ENCODE measurements at regions of chr1 and their contacts with region 1.

Region 1: DNA sequence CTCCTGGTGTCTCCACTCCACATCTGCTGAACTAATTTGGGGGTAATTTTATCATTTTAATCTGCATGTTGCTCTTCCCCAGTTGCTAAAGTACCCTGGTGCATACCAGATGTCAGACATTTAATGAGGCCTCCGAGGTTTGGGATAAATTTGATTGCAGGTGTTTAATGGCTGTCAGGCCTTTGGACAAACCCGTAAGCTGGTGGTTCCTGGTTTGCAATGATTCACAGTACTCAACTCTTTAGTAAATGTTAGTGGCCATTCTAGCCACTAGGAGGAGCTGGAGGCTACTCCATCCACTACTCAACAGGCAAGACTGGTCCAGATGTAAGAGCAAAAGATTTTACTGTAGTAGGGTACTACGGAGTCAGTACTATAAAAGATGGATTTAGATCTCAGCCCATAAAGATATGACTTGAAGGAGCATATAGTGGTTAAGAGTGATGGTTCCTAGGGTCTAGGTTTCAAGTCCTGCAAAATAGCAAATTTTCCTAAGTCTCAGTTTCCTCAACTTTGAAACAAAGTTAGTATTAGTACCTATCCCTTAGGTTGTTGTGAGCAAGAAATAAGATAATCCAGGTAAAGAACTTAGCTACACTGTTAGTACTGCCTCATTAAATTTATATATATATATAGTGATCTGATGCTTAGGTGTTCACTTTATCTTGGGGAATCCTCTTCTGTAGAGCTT is 132.8 kb downstream of the SNX7 start:
- DNase-seq: peak in 8 of 9 donors; percentile 23 to 78 (median 66)
- ATAC-seq: peak; percentile 89
- H3K4me3 ChIP-seq: no peak overlapping the region
- H3K4me3 Mint-ChIP-seq: no peak overlapping the region
- H3K27ac ChIP-seq: no peak overlapping the region
- H3K27ac Mint-ChIP-seq: peak overlapping the region in 2 of 9 donors; percentile 60 to 65
- H3K4me1 ChIP-seq: peaks cover 6 to 20% of the 10 kb centered on the region in 2 donors
- H3K4me1 Mint-ChIP-seq: peaks cover 20 to 44% (median 30%) of the 10 kb centered on the region in 7 donors
- H3K27me3 ChIP-seq: no peaks in the 10 kb centered on the region
- H3K27me3 Mint-ChIP-seq: peaks cover 0 to 12% (median 0%) of the 10 kb centered on the region in 5 donors

Region 2: DNA sequence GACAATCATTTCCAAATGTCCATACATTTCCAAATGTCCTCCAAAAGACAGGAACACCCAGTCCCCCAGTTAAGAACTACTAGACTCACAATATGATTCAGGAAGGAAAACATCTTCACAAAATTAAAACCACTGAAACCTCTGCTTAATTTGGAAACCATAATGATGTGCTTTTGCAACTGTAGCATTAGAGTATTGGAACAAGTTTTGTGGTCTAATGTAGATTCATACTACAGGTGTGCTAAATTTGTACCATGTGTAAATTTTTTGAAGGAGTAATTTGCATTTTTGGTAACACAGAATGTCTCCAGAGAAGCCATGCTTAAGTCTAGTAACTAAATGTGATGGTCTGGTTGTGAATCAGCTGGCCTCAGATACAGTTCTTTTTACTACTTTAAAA is 1003.1 kb before region 1 on chr1:
- CTCF ChIA-PET with region 1: no interaction called
- POLR2A ChIA-PET with region 1: no interaction called
- intact Hi-C with region 1: no loop called
- DNase-seq: no peak
- ATAC-seq: no peak
- H3K4me3 ChIP-seq: no peak overlapping the region
- H3K4me3 Mint-ChIP-seq: peak overlapping the region in 1 of 10 donors; percentile 34
- H3K27ac ChIP-seq: no peak overlapping the region
- H3K27ac Mint-ChIP-seq: no peak overlapping the region
- H3K4me1 ChIP-seq: peaks cover 0 to 20% of the 10 kb centered on the region in 2 donors
- H3K4me1 Mint-ChIP-seq: peaks cover 7 to 47% (median 37%) of the 10 kb centered on the region in 7 donors
- H3K27me3 ChIP-seq: no peaks in the 10 kb centered on the region
- H3K27me3 Mint-ChIP-seq: no peaks in the 10 kb centered on the region

Region 3: DNA sequence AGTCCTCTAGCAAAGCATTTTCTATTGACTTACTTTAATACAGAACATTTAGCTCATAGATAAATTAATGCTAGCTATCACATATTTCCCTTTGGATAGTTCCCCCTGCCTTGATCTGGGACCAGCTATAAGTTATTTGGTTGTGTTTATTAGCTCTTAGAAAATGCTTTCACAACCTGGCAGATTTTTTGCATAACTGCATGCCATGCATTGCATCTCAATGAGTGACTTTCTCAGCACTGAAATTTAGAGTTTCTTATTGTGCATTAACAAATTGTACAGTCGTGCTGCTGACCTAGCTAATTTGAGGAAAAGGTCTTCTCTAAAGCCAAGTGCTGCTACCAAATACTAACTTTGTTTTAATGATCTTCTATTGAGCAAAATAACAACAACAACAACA is 45.5 kb after region 1 on chr1:
- CTCF ChIA-PET with region 1: interaction called, 3 read pairs
- POLR2A ChIA-PET with region 1: no interaction called
- intact Hi-C with region 1: loop called in 1 of 2 experiments (anchors 5 kb)
- DNase-seq: no peak
- ATAC-seq: no peak
- H3K4me3 ChIP-seq: no peak overlapping the region
- H3K4me3 Mint-ChIP-seq: no peak overlapping the region
- H3K27ac ChIP-seq: no peak overlapping the region
- H3K27ac Mint-ChIP-seq: no peak overlapping the region
- H3K4me1 ChIP-seq: peaks cover 0 to 13% of the 10 kb centered on the region in 2 donors
- H3K4me1 Mint-ChIP-seq: peaks cover 0 to 31% (median 24%) of the 10 kb centered on the region in 7 donors
- H3K27me3 ChIP-seq: no peaks in the 10 kb centered on the region
- H3K27me3 Mint-ChIP-seq: peaks cover 0 to 1% (median 0%) of the 10 kb centered on the region in 5 donors

Region 4: GRCh38 chr1:98884864-98885263 is 90.5 kb after region 1 on chr1:
- CTCF ChIA-PET with region 1: no interaction called
- POLR2A ChIA-PET with region 1: no interaction called
- intact Hi-C with region 1: loop called in 1 of 2 experiments (anchors 5 kb)
- DNase-seq: no peak
- ATAC-seq: no peak
- H3K4me3 ChIP-seq: no peak overlapping the region
- H3K4me3 Mint-ChIP-seq: no peak overlapping the region
- H3K27ac ChIP-seq: no peak overlapping the region
- H3K27ac Mint-ChIP-seq: no peak overlapping the region
- H3K4me1 ChIP-seq: no peaks in the 10 kb centered on the region
- H3K4me1 Mint-ChIP-seq: peaks cover 0 to 25% (median 7%) of the 10 kb centered on the region in 7 donors
- H3K27me3 ChIP-seq: no peaks in the 10 kb centered on the region
- H3K27me3 Mint-ChIP-seq: peaks cover 0 to 2% (median 0%) of the 10 kb centered on the region in 5 donors

Region 5: GRCh38 chr1:98991127-98992012 is 197.0 kb after region 1 on chr1:
- CTCF ChIA-PET with region 1: interaction called, 4 read pairs
- POLR2A ChIA-PET with region 1: no interaction called
- intact Hi-C with region 1: loop called in 1 of 2 experiments (anchors 5 kb)
- DNase-seq: no peak
- ATAC-seq: no peak
- H3K4me3 ChIP-seq: no peak overlapping the region
- H3K4me3 Mint-ChIP-seq: no peak overlapping the region
- H3K27ac ChIP-seq: no peak overlapping the region
- H3K27ac Mint-ChIP-seq: peak overlapping the region in 3 of 9 donors; percentile 34 to 42 (median 39)
- H3K4me1 ChIP-seq: no peaks in the 10 kb centered on the region
- H3K4me1 Mint-ChIP-seq: peaks cover 0 to 9% (median 8%) of the 10 kb centered on the region in 7 donors
- H3K27me3 ChIP-seq: no peaks in the 10 kb centered on the region
- H3K27me3 Mint-ChIP-seq: peaks cover 0 to 4% (median 0%) of the 10 kb centered on the region in 5 donors

Region 6: GRCh38 chr1:99180343-99180808 is 386.0 kb after region 1 on chr1:
- CTCF ChIA-PET with region 1: interaction called, 8 read pairs
- POLR2A ChIA-PET with region 1: no interaction called
- intact Hi-C with region 1: loop called (anchors 1 to 5 kb)
- DNase-seq: peak in 8 of 9 donors; percentile 17 to 65 (median 51)
- ATAC-seq: peak; percentile 82
- H3K4me3 ChIP-seq: no peak overlapping the region
- H3K4me3 Mint-ChIP-seq: no peak overlapping the region
- H3K27ac ChIP-seq: no peak overlapping the region
- H3K27ac Mint-ChIP-seq: no peak overlapping the region
- H3K4me1 ChIP-seq: no peaks in the 10 kb centered on the region
- H3K4me1 Mint-ChIP-seq: no peaks in the 10 kb centered on the region
- H3K27me3 ChIP-seq: no peaks in the 10 kb centered on the region
- H3K27me3 Mint-ChIP-seq: peaks cover 0 to 6% (median 0%) of the 10 kb centered on the region in 5 donors

Region 7: GRCh38 chr1:99685516-99686180 is 891.3 kb after region 1 on chr1:
- CTCF ChIA-PET with region 1: no interaction called
- POLR2A ChIA-PET with region 1: no interaction called
- intact Hi-C with region 1: loop called in 1 of 2 experiments (anchors 1 kb)
- DNase-seq: peak in 4 of 9 donors; percentile 6 to 22 (median 8)
- ATAC-seq: peak; percentile 61
- H3K4me3 ChIP-seq: no peak overlapping the region
- H3K4me3 Mint-ChIP-seq: no peak overlapping the region
- H3K27ac ChIP-seq: no peak overlapping the region
- H3K27ac Mint-ChIP-seq: no peak overlapping the region
- H3K4me1 ChIP-seq: no peaks in the 10 kb centered on the region
- H3K4me1 Mint-ChIP-seq: no peaks in the 10 kb centered on the region
- H3K27me3 ChIP-seq: peaks cover 0 to 3% of the 10 kb centered on the region in 2 donors
- H3K27me3 Mint-ChIP-seq: peaks cover 0 to 16% (median 15%) of the 10 kb centered on the region in 5 donors

Region 8: GRCh38 chr1:99906535-99906934 is 1112.2 kb after region 1 on chr1:
- CTCF ChIA-PET with region 1: no interaction called
- POLR2A ChIA-PET with region 1: no interaction called
- intact Hi-C with region 1: no loop called
- DNase-seq: no peak
- ATAC-seq: no peak
- H3K4me3 ChIP-seq: no peak overlapping the region
- H3K4me3 Mint-ChIP-seq: no peak overlapping the region
- H3K27ac ChIP-seq: no peak overlapping the region
- H3K27ac Mint-ChIP-seq: no peak overlapping the region
- H3K4me1 ChIP-seq: no peaks in the 10 kb centered on the region
- H3K4me1 Mint-ChIP-seq: peaks cover 0 to 7% (median 0%) of the 10 kb centered on the region in 7 donors
- H3K27me3 ChIP-seq: no peaks in the 10 kb centered on the region
- H3K27me3 Mint-ChIP-seq: no peaks in the 10 kb centered on the region

Measured in naive thymus-derived CD4-positive, alpha-beta T cell (primary cell).